ENCODE measurements at regions of chr7 and their contacts with region 1.

Region 1: DNA sequence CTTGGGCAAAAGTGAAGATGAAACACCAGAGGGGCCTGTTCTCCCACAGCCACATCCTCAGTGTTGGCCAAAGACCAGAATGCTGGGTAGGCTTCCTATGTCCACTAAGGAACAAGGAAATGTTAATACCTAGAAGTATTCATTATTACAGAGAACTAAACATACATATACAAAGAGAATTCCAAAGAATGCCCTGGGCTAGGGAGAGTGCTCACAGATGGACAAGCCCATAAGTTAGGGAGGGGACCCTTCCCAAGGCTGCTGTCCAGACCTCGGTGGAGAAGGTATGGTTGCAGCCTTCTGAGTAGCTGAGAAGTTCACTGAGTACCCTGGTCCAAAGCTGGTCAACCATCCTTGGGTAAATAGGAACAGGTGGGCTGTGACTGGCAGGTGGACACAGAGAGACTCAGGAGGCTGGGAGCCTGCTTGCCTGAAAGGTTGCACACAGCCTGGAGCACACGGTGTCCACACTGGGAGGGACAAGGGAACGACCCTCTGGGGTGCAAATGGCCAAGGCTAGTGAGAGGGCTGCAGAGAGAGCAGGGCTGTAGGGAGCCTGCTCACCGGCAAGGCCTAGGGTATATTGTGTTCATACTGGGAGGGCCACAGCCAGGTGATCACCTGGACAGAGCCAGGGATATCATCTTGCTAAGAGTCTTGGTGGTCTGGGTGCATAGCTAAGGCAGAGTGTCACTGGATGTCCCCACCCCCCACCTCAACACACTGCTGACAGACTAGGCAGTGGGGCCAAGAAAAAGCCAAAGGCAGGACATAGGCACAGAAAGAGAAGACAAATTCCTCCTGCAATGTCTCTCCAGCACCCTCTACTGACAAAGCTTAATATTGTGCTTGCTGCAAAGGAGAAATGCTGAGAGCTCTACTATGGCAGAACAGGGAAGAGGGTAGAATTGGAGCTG is 40.3 kb downstream of the CPVL start:
- DNase-seq: peak in 1 of 2 donors; percentile 36
- H3K4me3 ChIP-seq: no peak overlapping the region
- H3K27ac ChIP-seq: no peak overlapping the region
- H3K4me1 ChIP-seq: no peaks in the 10 kb centered on the region
- H3K27me3 ChIP-seq: peaks cover 0 to 5% of the 10 kb centered on the region in 2 donors
- CTCF ChIP-seq: peak; percentile 74 to 81

Region 2: DNA sequence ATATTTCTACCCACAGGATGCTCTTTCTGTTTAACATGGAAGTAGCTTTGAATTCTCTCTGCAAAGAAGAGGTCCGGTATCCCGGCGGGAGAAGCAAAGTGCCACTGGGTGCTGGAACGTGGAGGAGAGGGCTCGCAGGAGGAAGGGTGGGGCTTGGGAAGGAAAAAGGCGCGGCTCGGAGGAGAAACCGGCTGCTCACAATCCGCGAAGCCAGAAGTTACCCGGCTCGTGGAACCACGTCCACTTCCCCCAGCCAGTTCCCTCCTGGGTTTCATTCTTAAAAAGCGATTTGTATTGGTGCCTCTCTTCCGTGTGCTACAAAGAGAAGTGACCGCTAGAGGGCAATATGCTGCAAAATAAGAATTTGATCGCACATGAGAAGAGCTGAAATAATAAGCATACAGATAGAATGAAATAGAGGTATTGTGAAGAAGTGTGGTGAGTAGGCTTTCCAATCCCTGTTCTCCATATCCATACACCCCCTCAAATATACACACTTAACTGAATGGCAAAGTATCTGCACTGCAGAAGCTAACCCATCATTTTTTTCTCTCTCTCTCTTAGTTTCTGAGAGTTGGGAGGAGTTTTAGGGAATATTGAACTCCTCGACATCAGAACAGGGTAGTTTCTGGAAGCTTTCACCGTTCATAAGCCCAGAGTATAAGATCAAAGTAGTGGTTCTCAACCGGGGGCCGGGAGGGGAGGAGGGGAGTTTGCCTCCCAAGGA is 179.0 kb before region 1 on chr7:
- intact Hi-C with region 1: loop called (anchors 2 kb)
- DNase-seq: peak; percentile 78 to 79
- H3K4me3 ChIP-seq: peak overlapping the region; percentile 46 to 53
- H3K27ac ChIP-seq: no peak overlapping the region
- H3K4me1 ChIP-seq: peaks cover 0 to 16% (median 7%) of the 10 kb centered on the region in 4 donors
- H3K27me3 ChIP-seq: peaks cover 0 to 2% of the 10 kb centered on the region in 2 donors
- CTCF ChIP-seq: peak; percentile 78

Region 3: GRCh38 chr7:29274146-29275017 is 168.4 kb after region 1 on chr7:
- intact Hi-C with region 1: no loop called
- DNase-seq: no peak
- H3K4me3 ChIP-seq: no peak overlapping the region
- H3K27ac ChIP-seq: no peak overlapping the region
- H3K4me1 ChIP-seq: no peaks in the 10 kb centered on the region
- H3K27me3 ChIP-seq: no peaks in the 10 kb centered on the region
- CTCF ChIP-seq: no peak

Measured in tibial artery (tissue), 4 donors.